Activated T-helper 1 cell treated with anti-CD3 and anti-CD28 coated beads, Interleukin-12 subunit alpha, Interleukin-12 subunit beta, Interleukin-2, Interleukin-4 antibody, amounts not matched to agents 30 ng/mL and 10 ng/mL and 1 ng/mL, durations not matched to agents 14 hours and 24 hours and 36 hours (primary cell): ENCODE measurements at regions of chr19 and their contacts with region 1.

Region 1: GRCh38 chr19:6632002-6632621 is 37.8 kb downstream of the TNFSF14 start:
- DNase-seq: peak; percentile 76
- H3K4me3 Mint-ChIP-seq: no peak overlapping the region
- H3K27ac Mint-ChIP-seq: no peak overlapping the region
- H3K4me1 Mint-ChIP-seq: peaks cover 29% of the 10 kb centered on the region
- H3K27me3 Mint-ChIP-seq: peaks cover 4% of the 10 kb centered on the region

Region 2: DNA sequence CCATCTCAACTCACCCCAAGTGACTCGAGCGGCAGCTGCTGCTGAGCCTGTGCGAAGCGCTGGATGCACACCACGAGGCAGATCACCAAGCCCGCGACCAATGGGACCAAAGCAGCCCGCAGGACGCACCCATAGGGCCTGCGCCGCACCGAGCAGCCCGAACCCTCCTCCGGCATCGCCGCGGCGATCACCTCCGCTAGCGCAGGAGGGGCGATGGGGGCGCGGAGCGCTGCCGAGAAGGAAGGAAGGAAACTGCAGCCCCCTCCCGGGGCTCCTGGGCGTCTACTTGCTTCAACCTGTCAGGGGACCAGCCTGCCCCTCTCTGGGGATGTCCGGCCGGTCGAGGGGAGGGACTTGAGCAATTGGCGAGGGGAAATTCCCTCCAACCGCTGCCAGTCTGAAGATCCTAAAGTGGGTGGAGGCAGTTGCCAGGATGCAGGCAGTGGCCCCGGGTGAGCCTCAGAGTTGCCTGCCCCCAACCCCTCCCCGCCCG is 41.2 kb before region 1 on chr19 and contains the start of gene CD70:
- intact Hi-C with region 1: no loop called
- DNase-seq: peak; percentile 70
- H3K4me3 Mint-ChIP-seq: peak within 1 kb of the TSS; percentile 95
- H3K27ac Mint-ChIP-seq: peak within 1 kb of the TSS; percentile 87
- H3K4me1 Mint-ChIP-seq: peaks cover 66% of the 10 kb centered on the region
- H3K27me3 Mint-ChIP-seq: peaks cover 33% of the 10 kb centered on the region
- total RNA-seq, gene CD70: 55.4 and 61.6 TPM in 2 replicates

Region 3: GRCh38 chr19:6753178-6754031 is 121.3 kb after region 1 on chr19:
- intact Hi-C with region 1: loop called (anchors 1 kb)
- DNase-seq: peak; percentile 76
- H3K4me3 Mint-ChIP-seq: peak overlapping the region; percentile 75
- H3K27ac Mint-ChIP-seq: peak overlapping the region; percentile 88
- H3K4me1 Mint-ChIP-seq: peaks cover 19% of the 10 kb centered on the region
- H3K27me3 Mint-ChIP-seq: no peaks in the 10 kb centered on the region

Region 4: GRCh38 chr19:6891761-6892385 is 259.8 kb after region 1 on chr19:
- intact Hi-C with region 1: no loop called
- DNase-seq: no peak
- H3K4me3 Mint-ChIP-seq: peak overlapping the region; percentile 6
- H3K27ac Mint-ChIP-seq: peak overlapping the region; percentile 91
- H3K4me1 Mint-ChIP-seq: peaks cover 55% of the 10 kb centered on the region
- H3K27me3 Mint-ChIP-seq: no peaks in the 10 kb centered on the region